ENCODE measurements at regions of chr5 and their contacts with region 1.

Region 1: GRCh38 chr5:100860407-100860806 is 42.7 kb downstream of the ST8SIA4 start:
- DNase-seq: no peak
- H3K4me3 Mint-ChIP-seq: peak overlapping the region; percentile 27
- H3K27ac Mint-ChIP-seq: peak overlapping the region; percentile 88
- H3K4me1 Mint-ChIP-seq: peaks cover 44% of the 10 kb centered on the region
- H3K27me3 Mint-ChIP-seq: no peaks in the 10 kb centered on the region

Region 2: DNA sequence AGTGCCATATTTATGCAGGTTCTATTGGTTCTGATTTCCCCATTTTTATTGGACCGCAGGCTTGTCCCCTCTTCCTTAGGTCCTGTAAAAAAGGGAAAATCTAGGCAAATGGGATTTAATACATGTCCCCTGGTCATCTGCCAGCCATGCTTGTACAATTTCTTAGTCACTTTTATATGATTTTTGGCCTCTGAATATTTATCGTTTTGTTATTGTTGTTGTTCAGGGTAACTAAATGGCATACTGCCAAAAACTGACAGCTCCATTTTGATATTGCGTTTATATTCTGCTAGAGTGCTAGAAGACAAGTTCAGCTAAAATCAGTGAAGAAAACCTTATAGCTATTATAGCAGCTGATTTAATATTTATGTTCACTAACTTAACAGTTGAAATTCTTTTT is 1095.4 kb before region 1 on chr5:
- intact Hi-C with region 1: no loop called
- DNase-seq: no peak
- H3K4me3 Mint-ChIP-seq: no peak overlapping the region
- H3K27ac Mint-ChIP-seq: no peak overlapping the region
- H3K4me1 Mint-ChIP-seq: no peaks in the 10 kb centered on the region
- H3K27me3 Mint-ChIP-seq: no peaks in the 10 kb centered on the region

Region 3: DNA sequence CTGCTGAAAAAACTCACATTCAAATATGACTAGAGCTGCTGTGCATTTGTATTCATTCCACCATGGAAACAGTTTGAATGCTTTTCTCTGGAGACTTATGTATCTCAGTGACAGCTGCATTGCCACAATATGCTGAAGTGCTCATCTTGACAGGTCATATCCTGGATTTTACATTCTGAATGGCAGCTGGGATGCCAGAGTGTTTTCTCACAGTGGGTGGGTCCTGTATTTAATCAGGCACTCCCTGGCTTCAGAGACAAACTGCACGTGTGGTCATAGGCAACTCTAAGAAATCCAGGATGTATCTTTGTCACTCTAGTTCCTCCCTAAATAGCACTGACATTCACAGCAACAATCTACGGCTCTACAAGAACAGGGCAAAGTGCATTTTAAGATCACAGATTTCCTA is 32.9 kb before region 1 on chr5:
- intact Hi-C with region 1: loop called (anchors 2 kb)
- DNase-seq: no peak
- H3K4me3 Mint-ChIP-seq: no peak overlapping the region
- H3K27ac Mint-ChIP-seq: peak overlapping the region; percentile 45
- H3K4me1 Mint-ChIP-seq: peaks cover 30% of the 10 kb centered on the region
- H3K27me3 Mint-ChIP-seq: no peaks in the 10 kb centered on the region

Region 4: DNA sequence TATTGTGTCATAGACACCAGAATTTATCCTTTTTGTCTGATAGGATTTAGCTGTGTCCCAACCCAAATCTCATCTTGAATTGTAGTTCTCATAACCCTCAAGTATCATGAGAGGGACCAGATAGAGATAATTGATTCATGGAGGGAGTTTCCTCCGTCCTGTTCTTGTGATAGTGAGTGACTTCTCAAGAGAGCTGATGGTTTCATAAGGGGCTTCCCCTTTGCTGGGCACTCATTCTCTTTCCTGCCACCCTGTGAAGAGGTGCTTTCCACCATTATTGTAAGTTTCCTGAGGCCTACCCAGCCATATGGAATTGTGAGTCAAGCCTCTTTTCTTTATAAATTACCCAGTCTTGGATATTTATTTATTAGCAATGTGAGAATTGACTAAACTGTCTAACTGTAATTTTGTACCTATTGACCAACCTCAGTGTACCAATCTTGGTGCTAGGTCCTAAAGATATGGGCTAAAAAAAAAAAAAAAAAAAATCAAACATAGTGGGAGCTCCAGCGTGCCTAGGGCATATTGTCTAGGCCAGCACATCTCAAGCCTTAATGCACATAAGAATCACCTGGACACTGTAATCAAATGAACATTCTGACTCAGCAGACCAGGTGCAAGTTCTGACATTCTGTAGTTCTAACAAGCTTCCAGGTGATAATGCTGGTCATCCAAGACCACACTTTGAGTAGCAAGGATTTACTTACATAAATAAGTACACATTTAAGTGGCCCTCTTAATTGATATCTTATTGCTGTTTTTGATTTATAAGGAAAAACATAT is 12.2 kb after region 1 on chr5:
- intact Hi-C with region 1: loop called (anchors 1 kb)
- DNase-seq: no peak
- H3K4me3 Mint-ChIP-seq: no peak overlapping the region
- H3K27ac Mint-ChIP-seq: peak overlapping the region; percentile 48
- H3K4me1 Mint-ChIP-seq: peaks cover 38% of the 10 kb centered on the region
- H3K27me3 Mint-ChIP-seq: no peaks in the 10 kb centered on the region

Measured in activated CD4-positive, alpha-beta T cell treated with anti-CD3 and anti-CD28 coated beads, Interleukin-2, amount 10 ng/mL, durations not matched to agents 24 days and 14 days (primary cell).